ENCODE measurements at regions of chr3 and their contacts with region 1.

Region 1: DNA sequence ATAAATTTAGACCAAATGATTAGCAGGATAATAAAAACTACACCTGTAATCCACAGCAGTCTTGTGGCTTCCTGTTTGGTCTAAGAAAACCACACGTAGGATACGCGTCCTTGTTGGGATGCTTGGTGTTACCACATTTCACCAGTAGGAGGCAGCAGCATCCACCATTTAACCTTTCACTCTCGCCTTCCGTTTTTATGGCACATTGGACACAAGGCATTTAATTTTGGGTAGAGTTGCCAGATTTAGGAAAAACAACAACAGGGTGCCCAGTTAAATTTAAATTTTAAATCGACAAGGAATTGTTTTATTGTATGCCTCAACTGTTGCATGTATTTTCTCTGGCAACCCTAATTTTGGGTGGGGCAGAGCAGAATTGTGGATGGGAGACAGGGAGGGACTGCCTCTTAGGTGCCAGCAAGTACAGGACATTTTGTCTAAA is 6.3 kb downstream of the LRRC31 start:
- DNase-seq: peak; percentile 87
- ATAC-seq: peak; percentile 55
- H3K4me3 ChIP-seq: no peak overlapping the region
- H3K4me3 Mint-ChIP-seq: no peak overlapping the region
- H3K27ac ChIP-seq: no peak overlapping the region
- H3K27ac Mint-ChIP-seq: peak overlapping the region; percentile 44
- H3K4me1 ChIP-seq: peaks cover 27 to 32% of the 10 kb centered on the region in 2 donors
- H3K4me1 Mint-ChIP-seq: peaks cover 23% of the 10 kb centered on the region
- H3K27me3 ChIP-seq: no peaks in the 10 kb centered on the region
- H3K27me3 Mint-ChIP-seq: no peaks in the 10 kb centered on the region
- CTCF ChIP-seq: peak; percentile 97

Region 2: GRCh38 chr3:169772897-169773828 is 90.3 kb before region 1 on chr3 and contains the start of gene MYNN:
- CTCF ChIA-PET with region 1: interaction called, 3 read pairs
- POLR2A ChIA-PET with region 1: no interaction called
- intact Hi-C with region 1: loop called (anchors 5 kb)
- DNase-seq: peak; percentile 96
- ATAC-seq: peak; percentile 78
- H3K4me3 ChIP-seq: peak within 1 kb of the TSS; percentile 89 to 97 (median 91)
- H3K4me3 Mint-ChIP-seq: peak within 1 kb of the TSS; percentile 100
- H3K27ac ChIP-seq: peak within 1 kb of the TSS; percentile 97
- H3K27ac Mint-ChIP-seq: peak within 1 kb of the TSS; percentile 99
- H3K4me1 ChIP-seq: peaks cover 16 to 19% of the 10 kb centered on the region in 2 donors
- H3K4me1 Mint-ChIP-seq: peaks cover 50% of the 10 kb centered on the region
- H3K27me3 ChIP-seq: no peaks in the 10 kb centered on the region
- H3K27me3 Mint-ChIP-seq: no peaks in the 10 kb centered on the region
- CTCF ChIP-seq: no peak
- total RNA-seq, gene MYNN: 24.0 and 25.5 TPM in 2 replicates

Region 3: GRCh38 chr3:169846458-169847193 is 16.9 kb before region 1 on chr3:
- CTCF ChIA-PET with region 1: interaction called, 60 read pairs
- POLR2A ChIA-PET with region 1: interaction called, 6 read pairs
- intact Hi-C with region 1: no loop called
- DNase-seq: peak; percentile 72
- ATAC-seq: peak; percentile 89
- H3K4me3 ChIP-seq: peak overlapping the region in 4 of 5 experiments; percentile 16 to 57 (median 43)
- H3K4me3 Mint-ChIP-seq: peak overlapping the region; percentile 80
- H3K27ac ChIP-seq: peak overlapping the region; percentile 68 to 74
- H3K27ac Mint-ChIP-seq: peak overlapping the region; percentile 95
- H3K4me1 ChIP-seq: peaks cover 44 to 46% of the 10 kb centered on the region in 2 donors
- H3K4me1 Mint-ChIP-seq: peaks cover 53% of the 10 kb centered on the region
- H3K27me3 ChIP-seq: no peaks in the 10 kb centered on the region
- H3K27me3 Mint-ChIP-seq: no peaks in the 10 kb centered on the region
- CTCF ChIP-seq: no peak

Region 4: GRCh38 chr3:169980055-169980454 is 116.6 kb after region 1 on chr3:
- CTCF ChIA-PET with region 1: interaction called, 23 read pairs
- POLR2A ChIA-PET with region 1: no interaction called
- intact Hi-C with region 1: no loop called
- DNase-seq: no peak
- ATAC-seq: no peak
- H3K4me3 ChIP-seq: no peak overlapping the region
- H3K4me3 Mint-ChIP-seq: no peak overlapping the region
- H3K27ac ChIP-seq: peak overlapping the region in 1 of 2 donors; percentile 55
- H3K27ac Mint-ChIP-seq: peak overlapping the region; percentile 33
- H3K4me1 ChIP-seq: peaks cover 9 to 25% of the 10 kb centered on the region in 2 donors
- H3K4me1 Mint-ChIP-seq: peaks cover 37% of the 10 kb centered on the region
- H3K27me3 ChIP-seq: no peaks in the 10 kb centered on the region
- H3K27me3 Mint-ChIP-seq: no peaks in the 10 kb centered on the region
- CTCF ChIP-seq: no peak

Region 5: DNA sequence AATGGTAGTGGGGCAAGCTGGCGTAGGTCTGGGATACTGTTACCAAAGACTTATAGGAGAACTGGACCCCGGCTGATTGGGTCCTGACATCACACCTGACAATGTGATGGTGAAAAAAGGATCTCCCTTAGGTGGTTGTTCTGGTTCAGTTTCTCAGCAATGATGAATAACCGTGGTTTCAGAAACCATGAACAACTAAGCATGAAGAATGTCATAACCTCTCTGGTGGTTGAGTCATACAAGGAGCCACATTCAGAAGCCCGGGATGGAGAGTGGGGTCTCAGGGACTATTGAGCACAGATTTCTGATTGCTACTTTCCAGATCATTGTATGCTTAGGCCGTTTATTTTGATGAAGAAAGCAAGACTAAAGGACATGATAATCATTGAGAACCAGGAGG is 191.7 kb after region 1 on chr3:
- CTCF ChIA-PET with region 1: interaction called, 10 read pairs
- POLR2A ChIA-PET with region 1: no interaction called
- intact Hi-C with region 1: loop called (anchors 1 kb)
- DNase-seq: no peak
- ATAC-seq: peak; percentile 37
- H3K4me3 ChIP-seq: peak overlapping the region in 2 of 5 experiments; percentile 18 to 21
- H3K4me3 Mint-ChIP-seq: peak overlapping the region; percentile 82
- H3K27ac ChIP-seq: no peak overlapping the region
- H3K27ac Mint-ChIP-seq: peak overlapping the region; percentile 67
- H3K4me1 ChIP-seq: peaks cover 23 to 25% of the 10 kb centered on the region in 2 donors
- H3K4me1 Mint-ChIP-seq: peaks cover 41% of the 10 kb centered on the region
- H3K27me3 ChIP-seq: no peaks in the 10 kb centered on the region
- H3K27me3 Mint-ChIP-seq: no peaks in the 10 kb centered on the region
- CTCF ChIP-seq: no peak

Region 6: GRCh38 chr3:170414202-170414663 is 550.8 kb after region 1 on chr3:
- CTCF ChIA-PET with region 1: interaction called, 4 read pairs
- POLR2A ChIA-PET with region 1: no interaction called
- intact Hi-C with region 1: loop called (anchors 10 kb)
- DNase-seq: peak; percentile 65
- ATAC-seq: peak; percentile 58
- H3K4me3 ChIP-seq: no peak overlapping the region
- H3K4me3 Mint-ChIP-seq: no peak overlapping the region
- H3K27ac ChIP-seq: no peak overlapping the region
- H3K27ac Mint-ChIP-seq: no peak overlapping the region
- H3K4me1 ChIP-seq: peaks cover 10 to 11% of the 10 kb centered on the region in 2 donors
- H3K4me1 Mint-ChIP-seq: peaks cover 10% of the 10 kb centered on the region
- H3K27me3 ChIP-seq: peaks cover 0 to 18% (median 12%) of the 10 kb centered on the region in 4 experiments
- H3K27me3 Mint-ChIP-seq: peaks cover 22% of the 10 kb centered on the region
- CTCF ChIP-seq: peak; percentile 92

Region 7: GRCh38 chr3:171428321-171428787 is 1564.9 kb after region 1 on chr3:
- CTCF ChIA-PET with region 1: no interaction called
- POLR2A ChIA-PET with region 1: no interaction called
- intact Hi-C with region 1: no loop called
- DNase-seq: no peak
- ATAC-seq: no peak
- H3K4me3 ChIP-seq: no peak overlapping the region
- H3K4me3 Mint-ChIP-seq: no peak overlapping the region
- H3K27ac ChIP-seq: no peak overlapping the region
- H3K27ac Mint-ChIP-seq: no peak overlapping the region
- H3K4me1 ChIP-seq: no peaks in the 10 kb centered on the region
- H3K4me1 Mint-ChIP-seq: no peaks in the 10 kb centered on the region
- H3K27me3 ChIP-seq: no peaks in the 10 kb centered on the region
- H3K27me3 Mint-ChIP-seq: no peaks in the 10 kb centered on the region
- CTCF ChIP-seq: no peak

Measured in B cell (primary cell).